ENCODE measurements at regions of chr2 and their contacts with region 1.

Region 1: DNA sequence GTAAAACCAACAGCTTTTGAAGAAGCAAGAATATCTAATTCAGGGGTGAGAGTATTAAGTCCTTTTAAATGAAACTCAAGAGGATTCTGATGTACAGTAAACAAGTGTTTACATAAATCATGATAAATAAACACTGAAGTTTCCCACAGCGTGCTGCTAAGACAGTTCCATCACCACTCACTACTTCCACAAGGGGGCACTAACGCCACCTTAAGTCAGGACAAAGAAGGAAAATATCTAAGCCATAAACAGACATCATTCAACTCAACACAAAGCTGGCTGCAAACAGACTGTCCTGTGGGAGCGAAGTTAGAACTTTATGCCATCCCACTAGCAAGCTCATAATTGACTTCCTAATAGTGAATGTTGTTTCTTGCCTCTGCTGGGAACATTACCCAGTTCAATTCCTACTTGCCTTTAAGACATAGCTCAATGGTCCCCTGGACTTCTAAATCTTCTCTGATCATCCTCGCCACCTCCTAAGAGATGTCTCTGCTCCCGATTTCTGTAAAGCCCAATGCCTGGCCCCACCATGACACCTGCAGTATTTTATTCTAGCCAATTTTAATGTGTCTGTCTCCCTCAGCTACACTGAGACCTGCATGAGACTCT is 36.5 kb downstream of the MRPL44 start:
- DNase-seq: peak; percentile 83
- ATAC-seq: peak; percentile 82
- H3K4me3 Mint-ChIP-seq: no peak overlapping the region
- H3K27ac Mint-ChIP-seq: peak overlapping the region; percentile 18
- H3K4me1 Mint-ChIP-seq: peaks cover 15% of the 10 kb centered on the region
- H3K27me3 Mint-ChIP-seq: no peaks in the 10 kb centered on the region
- CTCF ChIP-seq: peak; percentile 82

Region 2: DNA sequence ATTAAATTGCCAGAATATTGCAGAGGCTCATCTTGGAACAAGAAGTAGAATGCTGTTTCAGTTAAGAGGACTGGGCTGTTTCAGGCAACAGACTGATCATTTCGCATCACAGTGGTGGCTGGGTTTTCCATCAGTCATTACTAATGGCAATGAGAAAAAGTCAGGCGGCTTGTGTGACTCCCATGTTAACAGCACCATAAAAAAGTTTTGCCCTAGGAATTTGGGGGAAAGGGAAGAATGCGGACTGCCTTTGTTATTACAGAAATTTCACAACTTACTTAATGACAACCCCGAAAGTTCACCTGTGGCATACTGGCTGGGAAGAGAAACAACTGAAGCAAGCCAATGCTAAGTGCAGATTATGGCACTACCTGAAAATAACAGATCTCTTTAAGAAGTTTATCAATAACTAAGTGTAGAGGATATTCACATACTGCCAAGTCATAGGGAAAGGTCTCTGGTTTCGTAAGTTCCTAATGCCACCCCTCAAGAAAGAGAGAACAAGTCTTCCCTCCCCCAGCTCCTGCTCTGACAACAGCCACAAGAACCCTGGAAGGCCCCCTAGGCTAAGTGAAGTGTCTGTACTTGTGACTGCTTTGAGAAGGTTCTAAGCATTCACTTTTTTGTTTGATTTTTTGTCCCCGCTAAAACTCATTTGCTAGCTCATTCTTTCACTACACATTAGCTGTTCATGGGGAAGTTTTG is 115.8 kb before region 1 on chr2:
- CTCF ChIA-PET with region 1: no interaction called
- POLR2A ChIA-PET with region 1: no interaction called
- intact Hi-C with region 1: no loop called
- DNase-seq: no peak
- ATAC-seq: no peak
- H3K4me3 Mint-ChIP-seq: no peak overlapping the region
- H3K27ac Mint-ChIP-seq: no peak overlapping the region
- H3K4me1 Mint-ChIP-seq: no peaks in the 10 kb centered on the region
- H3K27me3 Mint-ChIP-seq: no peaks in the 10 kb centered on the region
- CTCF ChIP-seq: no peak

Region 3: GRCh38 chr2:223970343-223971128 is 23.2 kb before region 1 on chr2:
- CTCF ChIA-PET with region 1: interaction called, 93 read pairs
- POLR2A ChIA-PET with region 1: no interaction called
- intact Hi-C with region 1: no loop called
- DNase-seq: peak; percentile 68
- ATAC-seq: peak; percentile 79
- H3K4me3 Mint-ChIP-seq: no peak overlapping the region
- H3K27ac Mint-ChIP-seq: no peak overlapping the region
- H3K4me1 Mint-ChIP-seq: peaks cover 10% of the 10 kb centered on the region
- H3K27me3 Mint-ChIP-seq: no peaks in the 10 kb centered on the region
- CTCF ChIP-seq: peak; percentile 88

Region 4: GRCh38 chr2:224025874-224026273 is 32.1 kb after region 1 on chr2:
- CTCF ChIA-PET with region 1: interaction called, 19 read pairs
- POLR2A ChIA-PET with region 1: no interaction called
- intact Hi-C with region 1: no loop called
- DNase-seq: peak; percentile 90
- ATAC-seq: peak; percentile 95
- H3K4me3 Mint-ChIP-seq: peak overlapping the region; percentile 59
- H3K27ac Mint-ChIP-seq: peak overlapping the region; percentile 92
- H3K4me1 Mint-ChIP-seq: peaks cover 81% of the 10 kb centered on the region
- H3K27me3 Mint-ChIP-seq: no peaks in the 10 kb centered on the region
- CTCF ChIP-seq: no peak

Region 5: DNA sequence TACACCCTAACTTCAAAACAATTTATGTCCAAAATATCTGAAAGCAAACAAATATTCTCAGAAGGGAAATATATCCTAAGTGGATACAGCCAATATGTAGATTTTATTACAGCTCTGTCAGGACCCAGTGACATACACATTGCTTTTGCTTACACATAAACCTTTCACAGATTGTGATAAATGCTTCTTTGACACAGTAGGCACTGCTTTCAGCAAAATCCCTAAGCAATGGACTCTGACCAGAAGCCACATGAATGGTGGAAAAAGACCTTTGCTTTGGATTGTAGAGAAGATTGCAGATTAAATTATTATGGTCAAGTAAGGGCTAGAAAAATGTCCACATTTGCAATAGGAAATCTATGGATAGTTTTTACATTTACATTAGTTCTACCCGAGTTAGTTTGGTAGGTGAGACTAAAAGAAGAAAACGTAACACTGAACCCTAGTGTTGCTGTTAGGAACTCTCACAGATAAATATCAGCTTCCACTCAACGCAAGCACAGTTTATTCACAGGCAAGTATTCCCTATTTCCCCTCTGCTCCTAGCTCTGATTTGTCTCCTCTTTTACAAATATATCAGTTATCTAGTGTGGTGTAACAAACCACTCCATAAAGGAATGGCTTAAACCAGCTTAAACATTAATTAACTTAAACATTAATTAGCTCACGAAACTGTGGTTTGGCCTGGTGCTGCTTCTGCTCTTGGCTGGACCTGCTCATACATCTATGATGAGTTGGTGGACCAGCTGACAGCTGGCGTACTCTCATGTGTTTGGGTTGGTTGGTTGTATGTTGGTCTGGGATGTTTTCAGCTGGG is 69.0 kb after region 1 on chr2:
- CTCF ChIA-PET with region 1: interaction called, 30 read pairs
- POLR2A ChIA-PET with region 1: interaction called, 3 read pairs
- intact Hi-C with region 1: no loop called
- DNase-seq: no peak
- ATAC-seq: no peak
- H3K4me3 Mint-ChIP-seq: no peak overlapping the region
- H3K27ac Mint-ChIP-seq: no peak overlapping the region
- H3K4me1 Mint-ChIP-seq: no peaks in the 10 kb centered on the region
- H3K27me3 Mint-ChIP-seq: no peaks in the 10 kb centered on the region
- CTCF ChIP-seq: no peak

Region 6: DNA sequence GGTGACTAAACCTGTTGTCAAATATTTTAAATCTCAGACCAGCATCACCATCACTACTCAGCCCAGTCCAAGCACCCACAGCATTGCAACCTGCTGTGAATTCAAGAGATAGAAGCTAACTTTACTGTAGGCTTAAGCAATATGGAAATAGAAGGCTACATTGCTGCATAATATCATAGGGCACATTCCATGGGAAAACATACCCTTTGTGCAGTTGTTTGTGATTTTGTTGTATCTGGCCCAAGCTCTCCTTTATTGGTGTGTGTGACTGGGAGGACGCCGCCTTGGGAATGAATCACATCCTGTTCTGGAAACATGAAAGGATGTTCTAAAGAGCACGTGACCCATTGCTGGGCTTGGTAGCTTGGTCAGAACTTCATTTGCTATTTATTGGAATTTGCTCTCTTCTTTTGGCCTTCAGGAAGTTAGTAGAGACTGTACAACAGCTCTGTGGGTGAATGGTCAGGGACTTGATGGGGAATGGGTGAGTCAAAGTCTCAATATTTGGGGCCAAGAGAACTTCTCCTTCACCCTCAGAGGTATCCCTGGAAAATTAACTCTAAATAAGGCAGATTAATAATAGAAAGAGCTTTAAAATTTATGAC is 152.1 kb after region 1 on chr2:
- CTCF ChIA-PET with region 1: interaction called, 11 read pairs
- POLR2A ChIA-PET with region 1: no interaction called
- intact Hi-C with region 1: loop called (anchors 10 kb)
- DNase-seq: no peak
- ATAC-seq: no peak
- H3K4me3 Mint-ChIP-seq: no peak overlapping the region
- H3K27ac Mint-ChIP-seq: no peak overlapping the region
- H3K4me1 Mint-ChIP-seq: no peaks in the 10 kb centered on the region
- H3K27me3 Mint-ChIP-seq: peaks cover 15% of the 10 kb centered on the region
- CTCF ChIP-seq: no peak

Region 7: GRCh38 chr2:224284134-224284946 is 290.6 kb after region 1 on chr2:
- CTCF ChIA-PET with region 1: interaction called, 156 read pairs
- POLR2A ChIA-PET with region 1: interaction called, 4 read pairs
- intact Hi-C with region 1: loop called (anchors 1 kb)
- DNase-seq: peak; percentile 17
- ATAC-seq: peak; percentile 42
- H3K4me3 Mint-ChIP-seq: no peak overlapping the region
- H3K27ac Mint-ChIP-seq: no peak overlapping the region
- H3K4me1 Mint-ChIP-seq: no peaks in the 10 kb centered on the region
- H3K27me3 Mint-ChIP-seq: peaks cover 13% of the 10 kb centered on the region
- CTCF ChIP-seq: peak; percentile 81

Measured in activated CD8-positive, alpha-beta T cell treated with anti-CD3 and anti-CD28 coated beads for 36 hours (primary cell).